Activated CD8-positive, alpha-beta memory T cell treated with anti-CD3 and anti-CD28 coated beads, Interleukin-2, amount 10 ng/mL, durations not matched to agents 7 days and 5 days (primary cell): ENCODE measurements at regions of chr14 and their contacts with region 1.

Region 1: DNA sequence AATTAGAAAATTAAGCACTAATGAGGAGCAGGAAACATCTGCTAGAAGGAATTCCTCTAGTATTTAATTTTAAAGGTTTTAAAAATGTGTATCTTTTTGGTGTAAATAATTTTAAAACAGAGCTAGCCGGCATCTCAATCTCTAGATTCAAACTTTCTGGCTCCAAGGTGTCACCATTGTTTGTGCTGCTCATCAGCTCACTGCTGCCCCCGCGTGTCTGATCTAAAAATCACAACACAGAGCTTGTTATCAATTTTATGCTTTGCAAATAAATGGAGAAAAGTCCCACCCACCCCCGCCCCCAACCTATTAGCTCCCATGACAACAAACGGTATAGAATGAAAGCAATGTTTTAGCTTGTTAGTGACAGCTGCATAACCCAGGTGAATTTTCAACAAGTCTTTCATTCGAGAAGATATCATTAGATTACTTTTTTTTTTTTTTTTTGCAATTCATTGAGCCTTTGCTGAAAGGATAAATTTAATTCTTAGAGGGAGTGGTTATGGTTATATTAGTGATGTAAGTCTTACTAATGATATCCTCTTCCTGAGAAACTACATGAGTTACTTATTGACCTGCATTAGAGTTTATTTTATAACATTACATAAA is 11.3 kb upstream of the ABHD12B start:
- DNase-seq: peak; percentile 93
- ATAC-seq: peak; percentile 74
- H3K4me3 Mint-ChIP-seq: peak overlapping the region; percentile 84
- H3K27ac Mint-ChIP-seq: peak overlapping the region; percentile 86
- H3K4me1 Mint-ChIP-seq: peaks cover 11% of the 10 kb centered on the region
- H3K27me3 Mint-ChIP-seq: peaks cover 3% of the 10 kb centered on the region

Region 2: GRCh38 chr14:50303744-50304471 is 556.7 kb before region 1 on chr14:
- CTCF ChIA-PET with region 1: no interaction called
- DNase-seq: no peak
- ATAC-seq: no peak
- H3K4me3 Mint-ChIP-seq: no peak overlapping the region
- H3K27ac Mint-ChIP-seq: no peak overlapping the region
- H3K4me1 Mint-ChIP-seq: peaks cover 14% of the 10 kb centered on the region
- H3K27me3 Mint-ChIP-seq: no peaks in the 10 kb centered on the region

Region 3: GRCh38 chr14:50599700-50600444 is 260.7 kb before region 1 on chr14:
- CTCF ChIA-PET with region 1: interaction called, 16 read pairs
- DNase-seq: no peak
- ATAC-seq: no peak
- H3K4me3 Mint-ChIP-seq: no peak overlapping the region
- H3K27ac Mint-ChIP-seq: no peak overlapping the region
- H3K4me1 Mint-ChIP-seq: peaks cover 3% of the 10 kb centered on the region
- H3K27me3 Mint-ChIP-seq: no peaks in the 10 kb centered on the region

Region 4: GRCh38 chr14:50773632-50774541 is 86.7 kb before region 1 on chr14:
- CTCF ChIA-PET with region 1: interaction called, 90 read pairs
- DNase-seq: no peak
- ATAC-seq: peak; percentile 53
- H3K4me3 Mint-ChIP-seq: no peak overlapping the region
- H3K27ac Mint-ChIP-seq: no peak overlapping the region
- H3K4me1 Mint-ChIP-seq: peaks cover 25% of the 10 kb centered on the region
- H3K27me3 Mint-ChIP-seq: no peaks in the 10 kb centered on the region

Region 5: DNA sequence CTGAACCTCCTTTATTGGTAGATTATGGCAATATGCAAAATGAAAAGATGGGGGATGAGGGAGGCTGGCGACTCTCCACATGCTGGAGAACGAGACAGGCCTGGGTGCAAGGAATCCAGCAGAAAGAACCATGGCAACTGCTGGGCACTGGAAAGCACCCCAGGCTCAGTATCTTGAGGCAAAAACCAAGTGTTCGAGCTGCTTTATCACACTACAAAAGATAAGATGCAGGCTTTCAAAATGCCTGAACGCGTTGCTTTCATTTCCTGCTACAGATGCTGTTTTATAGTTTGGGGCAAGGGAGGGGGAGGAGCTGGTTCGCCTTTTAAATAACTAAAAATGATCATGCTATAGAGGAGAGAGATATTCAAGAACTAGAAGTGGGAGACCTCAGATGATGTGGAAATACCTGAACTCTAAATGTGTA is 68.5 kb before region 1 on chr14:
- CTCF ChIA-PET with region 1: interaction called, 58 read pairs
- DNase-seq: no peak
- ATAC-seq: peak; percentile 56
- H3K4me3 Mint-ChIP-seq: peak overlapping the region; percentile 72
- H3K27ac Mint-ChIP-seq: peak overlapping the region; percentile 90
- H3K4me1 Mint-ChIP-seq: peaks cover 60% of the 10 kb centered on the region
- H3K27me3 Mint-ChIP-seq: no peaks in the 10 kb centered on the region

Region 6: DNA sequence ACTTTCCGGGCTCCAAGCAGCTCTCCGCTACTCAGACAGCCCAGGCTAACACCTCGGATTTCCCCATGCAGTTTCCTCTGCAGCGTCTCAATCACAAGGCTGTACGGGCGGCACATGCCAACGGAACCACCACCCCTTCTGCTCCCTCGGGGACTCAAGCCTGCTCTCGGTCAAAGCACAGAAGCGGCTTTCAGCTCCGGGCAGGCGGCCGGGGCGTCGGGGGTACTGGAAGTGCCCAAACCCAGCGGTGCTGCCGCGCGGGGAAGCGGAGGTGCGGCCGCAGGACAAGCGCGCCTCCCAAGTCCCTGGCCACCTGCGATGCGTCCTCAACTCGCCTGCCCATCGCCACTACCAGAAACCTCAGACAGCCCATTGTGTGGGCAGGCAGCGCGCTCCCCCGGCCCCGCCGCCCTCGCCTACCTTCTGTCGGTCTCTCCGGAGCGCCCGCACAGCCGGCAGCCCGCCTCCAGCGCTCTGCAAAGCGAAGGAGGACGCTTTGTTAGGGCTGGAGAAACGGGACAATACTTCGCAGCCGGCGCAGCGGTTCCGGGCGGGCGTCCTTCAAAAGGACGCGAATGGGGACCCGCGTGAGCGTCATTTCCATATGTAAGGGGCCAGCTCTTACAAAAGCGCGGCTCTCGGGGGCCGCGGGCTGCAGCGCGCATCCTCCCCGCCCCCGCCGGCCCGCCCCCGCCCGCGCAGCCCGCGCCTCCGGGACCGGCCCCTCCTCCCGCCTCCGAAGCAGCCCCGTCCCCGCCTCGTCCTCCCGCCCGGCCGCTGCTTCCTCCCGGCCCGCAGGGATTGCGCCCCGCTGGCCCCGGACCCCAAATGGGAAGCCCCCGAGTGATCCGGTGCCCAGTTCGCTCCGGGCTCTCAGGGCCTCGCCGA is 30.3 kb before region 1 on chr14:
- CTCF ChIA-PET with region 1: interaction called, 36 read pairs
- DNase-seq: peak; percentile 76
- ATAC-seq: peak; percentile 60
- H3K4me3 Mint-ChIP-seq: peak overlapping the region; percentile 87
- H3K27ac Mint-ChIP-seq: peak overlapping the region; percentile 76
- H3K4me1 Mint-ChIP-seq: peaks cover 52% of the 10 kb centered on the region
- H3K27me3 Mint-ChIP-seq: peaks cover 6% of the 10 kb centered on the region

Region 7: GRCh38 chr14:50875359-50876070 is 14.9 kb after region 1 on chr14:
- CTCF ChIA-PET with region 1: interaction called, 11 read pairs
- DNase-seq: peak; percentile 88
- ATAC-seq: peak; percentile 95
- H3K4me3 Mint-ChIP-seq: no peak overlapping the region
- H3K27ac Mint-ChIP-seq: no peak overlapping the region
- H3K4me1 Mint-ChIP-seq: peaks cover 39% of the 10 kb centered on the region
- H3K27me3 Mint-ChIP-seq: peaks cover 88% of the 10 kb centered on the region

Region 8: DNA sequence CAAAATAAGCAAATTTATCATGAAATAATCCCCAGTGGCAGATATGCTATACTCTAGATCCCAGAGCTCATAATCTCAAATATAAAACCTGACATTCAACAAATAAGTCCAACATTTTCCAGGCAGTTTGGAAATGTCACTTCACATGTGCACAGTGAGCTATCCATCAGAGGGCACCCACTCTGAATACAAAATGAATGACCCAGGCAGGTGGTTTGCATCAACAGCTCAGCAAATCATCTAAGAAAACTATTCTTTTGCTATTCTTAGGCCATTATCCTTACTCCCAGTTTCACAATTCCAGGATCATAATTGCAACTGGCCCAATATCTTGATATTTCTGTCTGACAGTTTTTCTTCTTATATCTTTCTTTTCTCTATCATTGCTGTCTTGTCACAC is 195.8 kb after region 1 on chr14:
- CTCF ChIA-PET with region 1: no interaction called
- DNase-seq: no peak
- ATAC-seq: no peak
- H3K4me3 Mint-ChIP-seq: no peak overlapping the region
- H3K27ac Mint-ChIP-seq: no peak overlapping the region
- H3K4me1 Mint-ChIP-seq: no peaks in the 10 kb centered on the region
- H3K27me3 Mint-ChIP-seq: peaks cover 5% of the 10 kb centered on the region